Mammary epithelial cell (primary cell): ENCODE measurements at regions of chr11 and their contacts with region 1.

Region 1: DNA sequence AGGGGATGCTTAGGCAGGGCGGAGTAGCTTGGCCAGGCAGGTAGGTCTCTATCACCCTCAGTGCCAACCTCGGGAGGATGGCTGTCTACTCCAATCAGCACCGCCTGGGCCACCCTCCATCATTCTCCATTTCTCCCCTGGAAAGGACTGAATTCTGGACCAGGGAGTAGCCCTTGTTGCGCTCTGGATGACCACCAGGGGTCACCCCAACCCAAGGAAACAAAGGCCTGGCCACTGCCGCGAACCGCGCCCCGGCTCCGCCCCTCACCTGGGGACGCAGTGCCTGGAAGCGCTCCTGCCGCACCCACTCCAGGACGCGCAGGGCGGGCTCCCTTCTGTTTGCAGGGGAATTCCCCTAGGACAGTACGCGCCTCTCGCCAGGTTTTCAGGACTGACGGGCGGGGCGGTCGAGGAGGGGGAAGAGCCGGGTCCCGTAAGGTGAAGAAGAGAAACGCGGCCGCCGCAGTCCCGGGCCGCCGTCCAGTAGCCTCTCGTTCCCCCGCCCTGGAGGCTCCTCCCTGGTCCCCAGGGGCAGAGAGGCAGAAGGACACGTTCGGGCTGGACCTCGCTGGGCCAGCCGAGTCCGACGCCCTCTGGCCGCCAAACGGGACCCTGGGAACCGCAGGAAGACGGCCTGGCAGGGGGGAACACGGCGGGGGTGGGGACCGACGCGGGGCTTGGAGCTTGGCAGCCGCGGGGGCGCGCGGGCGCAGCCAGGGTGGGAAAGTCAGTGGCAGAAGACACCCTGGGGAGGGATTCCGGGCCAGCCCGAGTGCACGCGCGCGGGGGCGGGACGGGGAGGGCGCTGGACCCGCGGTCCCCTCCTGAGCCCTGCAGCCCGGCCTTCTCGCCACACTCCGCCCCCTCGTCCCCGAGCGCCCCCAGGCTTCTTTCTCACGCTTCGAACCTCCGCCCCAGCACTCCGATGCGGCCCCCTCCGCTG is 7.1 kb downstream of the SCN4B start:
- DNase-seq: peak; percentile 89
- H3K4me3 ChIP-seq: peak overlapping the region; percentile 45 to 63 (median 56)
- H3K27ac ChIP-seq: peak overlapping the region; percentile 48
- H3K4me1 ChIP-seq: peaks cover 25% of the 10 kb centered on the region
- H3K27me3 ChIP-seq: no peaks in the 10 kb centered on the region
- CTCF ChIP-seq: peak; percentile 80 to 88

Region 2: DNA sequence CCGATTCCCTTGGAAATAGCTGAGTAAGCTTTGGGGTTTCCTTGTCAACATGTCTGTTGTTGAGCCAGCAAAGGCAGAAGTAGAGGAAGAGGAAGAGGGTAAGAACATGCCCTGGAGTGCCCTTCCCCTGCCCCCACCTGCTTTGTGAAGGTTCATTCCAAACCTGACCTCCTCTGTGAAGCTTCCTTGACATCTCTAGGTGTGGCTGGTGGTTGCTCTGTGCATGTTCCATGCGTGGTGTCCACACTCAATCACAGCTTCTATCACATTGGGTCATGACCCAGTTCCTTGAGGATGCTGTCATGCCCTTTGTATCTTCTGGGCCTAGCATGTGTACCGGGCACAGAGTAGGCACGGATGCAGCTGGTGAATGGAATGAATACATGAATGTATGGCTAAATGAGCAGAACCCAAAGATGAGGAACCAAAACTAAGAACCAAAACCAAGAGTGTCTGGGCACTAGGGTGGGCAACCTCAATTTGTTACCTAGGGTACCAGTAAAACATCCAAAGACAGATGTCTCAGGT is 245.4 kb before region 1 on chr11:
- CTCF ChIA-PET with region 1: no interaction called
- dilution Hi-C with region 1: no loop called
- in situ Hi-C with region 1: no loop called
- intact Hi-C with region 1: no loop called
- DNase-seq: no peak
- H3K4me3 ChIP-seq: no peak overlapping the region
- H3K27ac ChIP-seq: no peak overlapping the region
- H3K4me1 ChIP-seq: peaks cover 6% of the 10 kb centered on the region
- H3K27me3 ChIP-seq: peaks cover 4% of the 10 kb centered on the region
- CTCF ChIP-seq: no peak

Region 3: GRCh38 chr11:118051611-118052461 is 93.7 kb before region 1 on chr11:
- CTCF ChIA-PET with region 1: no interaction called
- dilution Hi-C with region 1: no loop called
- in situ Hi-C with region 1: no loop called
- intact Hi-C with region 1: loop called (anchors 5 kb)
- DNase-seq: no peak
- H3K4me3 ChIP-seq: no peak overlapping the region
- H3K27ac ChIP-seq: no peak overlapping the region
- H3K4me1 ChIP-seq: no peaks in the 10 kb centered on the region
- H3K27me3 ChIP-seq: no peaks in the 10 kb centered on the region
- CTCF ChIP-seq: no peak

Region 4: GRCh38 chr11:118171269-118172062 is 25.9 kb after region 1 on chr11:
- CTCF ChIA-PET with region 1: no interaction called
- dilution Hi-C with region 1: no loop called
- in situ Hi-C with region 1: no loop called
- intact Hi-C with region 1: loop called (anchors 1 kb)
- DNase-seq: peak; percentile 37
- H3K4me3 ChIP-seq: no peak overlapping the region
- H3K27ac ChIP-seq: no peak overlapping the region
- H3K4me1 ChIP-seq: peaks cover 23% of the 10 kb centered on the region
- H3K27me3 ChIP-seq: no peaks in the 10 kb centered on the region
- CTCF ChIP-seq: peak; percentile 64 to 91

Region 5: GRCh38 chr11:118251858-118252652 is 106.5 kb after region 1 on chr11 and contains the start of gene MPZL3:
- CTCF ChIA-PET with region 1: interaction called, 3 read pairs
- dilution Hi-C with region 1: no loop called
- in situ Hi-C with region 1: no loop called
- intact Hi-C with region 1: loop called (anchors 1 kb)
- DNase-seq: peak; percentile 98
- H3K4me3 ChIP-seq: peak within 1 kb of the TSS; percentile 58 to 81 (median 64)
- H3K27ac ChIP-seq: peak within 1 kb of the TSS; percentile 96
- H3K4me1 ChIP-seq: no peaks in the 10 kb centered on the region
- H3K27me3 ChIP-seq: no peaks in the 10 kb centered on the region
- CTCF ChIP-seq: peak in 1 of 2 donors; percentile 22
- total RNA-seq, gene MPZL3: 10.9 to 25.7 TPM

Region 6: DNA sequence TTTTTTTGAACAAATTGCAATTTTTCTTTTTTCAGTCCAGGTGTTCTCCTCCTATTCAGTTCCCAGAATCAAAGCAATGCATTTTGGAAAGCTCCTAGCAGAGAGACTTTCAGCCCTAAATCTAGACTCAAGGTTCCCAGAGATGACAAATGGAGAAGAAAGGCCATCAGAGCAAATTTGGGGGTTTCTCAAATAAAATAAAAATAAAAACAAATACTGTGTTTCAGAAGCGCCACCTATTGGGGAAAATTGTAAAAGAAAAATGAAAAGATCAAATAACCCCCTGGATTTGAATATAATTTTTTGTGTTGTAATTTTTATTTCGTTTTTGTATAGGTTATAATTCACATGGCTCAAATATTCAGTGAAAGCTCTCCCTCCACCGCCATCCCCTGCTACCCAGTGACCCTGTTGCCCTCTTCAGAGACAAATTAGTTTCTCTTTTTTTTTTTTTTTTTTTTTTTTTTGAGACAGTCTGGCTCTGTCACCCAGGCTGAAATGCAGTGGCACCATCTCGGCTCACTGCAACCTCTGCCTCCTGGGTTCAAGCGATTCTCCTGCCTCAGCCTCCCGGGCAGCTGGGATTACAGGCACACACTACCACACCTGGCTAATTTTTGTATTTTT is 207.6 kb after region 1 on chr11:
- CTCF ChIA-PET with region 1: no interaction called
- dilution Hi-C with region 1: no loop called
- in situ Hi-C with region 1: no loop called
- intact Hi-C with region 1: loop called (anchors 1 kb)
- DNase-seq: no peak
- H3K4me3 ChIP-seq: no peak overlapping the region
- H3K27ac ChIP-seq: no peak overlapping the region
- H3K4me1 ChIP-seq: no peaks in the 10 kb centered on the region
- H3K27me3 ChIP-seq: no peaks in the 10 kb centered on the region
- CTCF ChIP-seq: peak; percentile 17 to 50

Region 7: GRCh38 chr11:118565051-118565450 is 419.5 kb after region 1 on chr11:
- CTCF ChIA-PET with region 1: no interaction called
- dilution Hi-C with region 1: no loop called
- in situ Hi-C with region 1: loop called in 1 of 2 experiments (anchors 10 kb)
- intact Hi-C with region 1: loop called (anchors 1 kb)
- DNase-seq: peak; percentile 13
- H3K4me3 ChIP-seq: peak overlapping the region in 2 of 3 experiments; percentile 34 to 63
- H3K27ac ChIP-seq: no peak overlapping the region
- H3K4me1 ChIP-seq: peaks cover 4% of the 10 kb centered on the region
- H3K27me3 ChIP-seq: no peaks in the 10 kb centered on the region
- CTCF ChIP-seq: no peak